GM12878 (cell line): ENCODE measurements at regions of chr6 and their contacts with region 1.

Region 1: GRCh38 chr6:336159-337019 is 44.1 kb downstream of the DUSP22 start:
- DNase-seq: peak; percentile 88
- ATAC-seq: peak; percentile 12
- H3K4me3 ChIP-seq: peak overlapping the region; percentile 11; the same call in 1 of the 2 replicates
- H3K27ac ChIP-seq: peak overlapping the region; percentile 86
- H3K4me1 ChIP-seq: peaks cover 86% of the 10 kb centered on the region
- H3K27me3 ChIP-seq: no peaks in the 10 kb centered on the region
- CTCF ChIP-seq: no peak
- EP300 ChIP-seq: 0 out of 4 replicates have a peak, but pooled peaks of 1 of the 2 experiments have one; percentile 30
- POLR2A ChIP-seq: no peak
- RAD21 ChIP-seq: 0 out of 2 replicates have a peak, but pooled peaks have one; percentile 21

Region 2: DNA sequence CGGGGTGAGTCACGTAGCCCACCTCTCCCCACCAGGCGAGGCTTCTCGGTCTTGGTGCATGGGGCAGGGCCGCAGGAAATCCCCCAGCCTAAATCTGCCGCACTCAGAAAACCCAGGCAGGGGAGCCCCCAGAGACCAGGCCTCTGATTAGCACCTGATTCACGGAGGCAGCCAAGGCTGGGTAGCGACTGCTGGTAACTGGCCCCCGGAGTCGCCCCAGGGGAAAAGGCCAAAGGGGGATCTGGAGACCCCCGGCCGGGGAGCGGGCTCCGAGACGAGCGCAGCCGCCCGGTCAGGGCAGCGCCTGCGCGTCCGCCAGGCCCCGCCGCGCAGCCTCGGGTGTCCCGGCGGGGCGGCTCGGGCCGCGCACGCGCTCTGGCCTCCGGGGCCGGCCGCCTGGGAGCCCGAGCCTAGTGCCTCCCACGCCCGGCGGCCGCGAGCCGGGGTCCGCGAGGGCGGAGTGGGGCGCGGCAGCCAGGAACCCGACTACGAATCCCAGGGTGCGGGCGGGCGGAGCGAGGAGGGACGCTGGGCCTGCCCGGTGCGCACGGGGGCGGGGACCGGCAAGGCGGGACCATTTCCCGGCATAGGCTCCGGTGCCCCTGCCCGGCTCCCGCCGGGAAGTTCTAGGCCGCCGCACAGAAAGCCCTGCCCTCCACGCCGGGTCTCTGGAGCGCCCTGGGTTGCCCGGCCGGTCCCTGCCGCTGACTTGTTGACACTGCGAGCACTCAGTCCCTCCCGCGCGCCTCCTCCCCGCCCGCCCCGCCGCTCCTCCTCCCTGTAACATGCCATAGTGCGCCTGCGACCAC is 44.5 kb before region 1 on chr6 and contains the start of gene DUSP22:
- CTCF ChIA-PET with region 1: interaction called, 14 read pairs
- POLR2A ChIA-PET with region 1: interaction called, 67 read pairs
- RAD21 ChIA-PET with region 1: interaction called, 38 read pairs
- SMC1A ChIA-PET with region 1: interaction called, 82 read pairs
- in situ Hi-C with region 1: no loop called
- intact Hi-C with region 1: loop called (anchors 1 kb)
- DNase-seq: peak; percentile 81
- ATAC-seq: peak; percentile 45
- H3K4me3 ChIP-seq: peak within 1 kb of the TSS; percentile 78
- H3K27ac ChIP-seq: peak within 1 kb of the TSS; percentile 100
- H3K4me1 ChIP-seq: peaks cover 64% of the 10 kb centered on the region
- H3K27me3 ChIP-seq: no peaks in the 10 kb centered on the region
- CTCF ChIP-seq: no peak
- EP300 ChIP-seq: peak; percentile 53 to 76; a peak in 2 of 4 replicates
- POLR2A ChIP-seq: no peak
- RAD21 ChIP-seq: peak; percentile 42
- polyA plus RNA-seq, gene DUSP22: 93.4 to 99.7 TPM

Region 3: DNA sequence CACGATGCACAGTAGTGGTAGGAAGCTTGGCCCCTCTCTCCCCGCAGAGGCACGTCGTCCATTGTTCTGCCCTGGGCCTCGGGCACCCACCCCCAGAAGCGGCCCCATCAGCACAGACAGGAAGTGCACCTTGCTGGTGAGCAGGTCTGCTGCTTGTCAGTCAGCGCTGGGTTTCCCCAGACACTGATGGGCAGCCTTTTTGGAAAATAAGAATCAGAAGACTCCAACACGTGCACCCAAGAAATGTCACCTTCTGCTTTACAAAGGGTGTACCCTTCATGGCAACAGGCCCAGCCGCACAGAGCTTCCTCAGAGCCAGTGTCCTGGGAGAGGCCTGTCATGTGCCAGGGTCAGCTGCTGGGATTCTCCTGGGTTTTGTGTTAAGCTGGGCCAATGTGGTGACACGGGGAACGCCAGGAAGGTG is 20.5 kb after region 1 on chr6:
- CTCF ChIA-PET with region 1: interaction called, 32 read pairs
- POLR2A ChIA-PET with region 1: interaction called, 81 read pairs
- RAD21 ChIA-PET with region 1: interaction called, 73 read pairs
- SMC1A ChIA-PET with region 1: interaction called, 230 read pairs
- in situ Hi-C with region 1: no loop called
- intact Hi-C with region 1: no loop called
- DNase-seq: no peak
- ATAC-seq: peak; percentile 80
- H3K4me3 ChIP-seq: no peak overlapping the region
- H3K27ac ChIP-seq: peak overlapping the region; percentile 56
- H3K4me1 ChIP-seq: peaks cover 45% of the 10 kb centered on the region
- H3K27me3 ChIP-seq: no peaks in the 10 kb centered on the region
- CTCF ChIP-seq: no peak
- EP300 ChIP-seq: no peak
- POLR2A ChIP-seq: no peak
- RAD21 ChIP-seq: no peak

Region 4: DNA sequence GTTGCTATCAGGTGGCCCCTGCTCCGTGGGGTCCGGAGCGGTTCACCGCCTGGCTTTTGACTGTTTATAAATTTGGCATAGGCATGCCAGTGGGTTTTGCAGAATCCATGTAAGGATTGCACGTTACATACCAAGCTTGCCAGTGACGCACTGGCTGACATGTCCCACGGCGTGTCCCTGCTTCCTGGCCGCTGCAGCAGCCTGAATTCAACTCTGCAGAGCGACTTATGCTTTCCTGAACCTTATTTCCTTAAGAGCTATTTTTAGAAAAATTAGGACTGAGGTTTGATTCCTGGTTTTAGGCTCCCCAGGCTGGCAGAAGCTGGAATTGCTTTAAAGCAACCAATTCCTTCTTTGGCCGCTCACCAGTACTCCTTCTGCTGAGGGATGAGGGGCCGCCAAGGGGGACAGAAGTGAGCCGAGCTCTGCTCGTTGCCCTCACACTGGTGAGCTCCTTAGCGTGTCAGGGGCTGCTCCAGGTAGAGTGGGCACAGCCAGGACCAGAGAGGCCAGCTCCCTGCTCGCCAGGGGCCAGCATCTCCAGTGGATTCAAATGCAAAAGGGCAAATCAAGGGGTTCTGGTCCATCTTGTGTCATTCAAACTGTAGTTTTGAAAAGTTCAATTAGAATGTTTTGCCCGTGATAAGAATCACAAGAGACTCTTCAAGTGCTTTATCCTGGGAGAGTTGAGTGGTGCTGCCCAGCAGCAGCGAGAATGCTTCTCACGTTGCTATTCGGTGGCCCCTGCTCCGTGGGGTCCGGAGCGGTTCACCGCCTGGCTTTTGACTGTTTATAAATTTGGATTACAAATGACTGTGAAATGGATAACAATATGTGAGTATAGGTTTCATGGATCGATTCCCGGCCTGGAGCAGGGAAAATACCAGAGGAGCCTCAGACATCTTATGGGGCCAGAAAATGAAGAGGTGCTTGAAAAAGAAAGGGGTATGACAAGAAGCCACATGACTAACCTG is 37.6 kb after region 1 on chr6:
- CTCF ChIA-PET with region 1: interaction called, 3 read pairs
- POLR2A ChIA-PET with region 1: interaction called, 3 read pairs
- RAD21 ChIA-PET with region 1: interaction called, 5 read pairs
- SMC1A ChIA-PET with region 1: interaction called, 15 read pairs
- in situ Hi-C with region 1: no loop called
- intact Hi-C with region 1: no loop called
- DNase-seq: no peak
- ATAC-seq: no peak
- H3K4me3 ChIP-seq: no peak overlapping the region
- H3K27ac ChIP-seq: no peak overlapping the region
- H3K4me1 ChIP-seq: peaks cover 35% of the 10 kb centered on the region
- H3K27me3 ChIP-seq: no peaks in the 10 kb centered on the region
- CTCF ChIP-seq: no peak
- EP300 ChIP-seq: no peak
- POLR2A ChIP-seq: no peak
- RAD21 ChIP-seq: no peak

Region 5: DNA sequence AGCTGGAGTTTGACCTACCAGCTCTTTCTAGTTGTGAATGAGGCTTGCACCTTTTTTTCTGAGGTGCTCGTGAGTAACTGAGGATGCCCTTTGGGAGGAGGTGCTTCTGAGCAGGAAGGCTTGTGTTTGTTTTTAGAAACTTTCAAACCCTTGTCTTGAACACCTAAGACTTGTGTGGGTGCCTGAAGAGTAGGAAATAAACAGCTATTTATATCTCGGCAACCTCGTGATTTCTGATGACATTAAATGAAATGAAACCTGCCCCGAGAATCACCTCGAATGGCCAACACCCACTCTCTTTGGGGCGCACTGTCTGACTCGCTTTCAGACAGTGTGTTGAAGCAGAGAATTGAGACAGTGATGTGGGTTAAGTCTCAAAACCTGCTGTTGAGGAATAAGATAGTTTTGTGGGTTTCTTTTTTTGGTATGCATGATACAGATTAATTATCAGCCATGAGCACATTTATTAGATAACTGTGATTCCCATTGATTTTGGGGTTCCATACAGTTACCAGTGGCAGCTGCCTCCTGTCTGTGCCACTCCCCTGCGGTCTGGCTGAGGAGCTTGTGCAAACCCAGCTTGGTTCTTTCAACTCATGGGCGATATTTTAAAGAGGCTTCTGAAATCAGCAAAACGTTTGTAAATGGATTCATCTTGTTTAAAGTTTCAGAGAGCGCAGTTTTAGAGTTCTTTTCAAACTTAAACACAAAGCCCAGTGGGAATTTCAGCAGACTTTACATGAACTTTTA is 63.6 kb after region 1 on chr6:
- CTCF ChIA-PET with region 1: interaction called, 5 read pairs
- POLR2A ChIA-PET with region 1: interaction called, 9 read pairs
- RAD21 ChIA-PET with region 1: interaction called, 95 read pairs
- SMC1A ChIA-PET with region 1: interaction called, 116 read pairs
- in situ Hi-C with region 1: no loop called
- intact Hi-C with region 1: no loop called
- DNase-seq: no peak
- ATAC-seq: peak; percentile 10
- H3K4me3 ChIP-seq: peak overlapping the region; percentile 61
- H3K27ac ChIP-seq: peak overlapping the region; percentile 39
- H3K4me1 ChIP-seq: peaks cover 35% of the 10 kb centered on the region
- H3K27me3 ChIP-seq: no peaks in the 10 kb centered on the region
- CTCF ChIP-seq: no peak
- EP300 ChIP-seq: peak; percentile 56 to 84; a peak in 2 of 4 replicates
- POLR2A ChIP-seq: peak; percentile 89
- RAD21 ChIP-seq: 0 out of 2 replicates have a peak, but pooled peaks have one; percentile 1

Region 6: DNA sequence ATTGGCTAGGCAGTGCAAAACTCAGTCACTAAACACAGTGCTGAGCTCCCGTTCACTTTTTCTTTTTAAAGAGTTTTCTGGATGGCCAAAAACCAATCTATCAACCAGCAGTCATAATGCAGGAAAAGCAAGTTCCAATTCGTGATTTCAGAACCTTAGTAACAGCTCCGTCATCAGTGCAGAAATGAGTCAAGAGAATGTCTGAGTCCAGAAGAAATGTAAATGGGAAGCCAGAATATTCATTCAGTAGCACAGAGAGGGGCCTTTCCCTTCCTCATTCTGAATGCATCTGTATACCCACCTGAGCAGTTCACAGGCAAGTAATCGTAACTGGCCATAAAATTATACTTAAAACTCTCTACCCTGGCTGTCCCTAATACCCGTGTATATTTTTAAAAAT is 300.1 kb after region 1 on chr6:
- CTCF ChIA-PET with region 1: no interaction called
- POLR2A ChIA-PET with region 1: no interaction called
- RAD21 ChIA-PET with region 1: no interaction called
- SMC1A ChIA-PET with region 1: no interaction called
- in situ Hi-C with region 1: no loop called
- intact Hi-C with region 1: no loop called
- DNase-seq: peak; percentile 32
- ATAC-seq: peak; percentile 80
- H3K4me3 ChIP-seq: no peak overlapping the region
- H3K27ac ChIP-seq: no peak overlapping the region
- H3K4me1 ChIP-seq: peaks cover 8% of the 10 kb centered on the region
- H3K27me3 ChIP-seq: no peaks in the 10 kb centered on the region
- CTCF ChIP-seq: no peak
- EP300 ChIP-seq: no peak
- POLR2A ChIP-seq: no peak
- RAD21 ChIP-seq: no peak